Right cardiac atrium (tissue), 5 donors: ENCODE measurements at regions of chr1 and their contacts with region 1.

Region 1: GRCh38 chr1:154263465-154264332 is 8.7 kb upstream of the HAX1 start:
- DNase-seq: no peak
- ATAC-seq: peak in 1 of 2 donors; percentile 26
- H3K4me3 ChIP-seq: no peak overlapping the region
- H3K27ac ChIP-seq: no peak overlapping the region
- H3K4me1 ChIP-seq: no peaks in the 10 kb centered on the region
- H3K27me3 ChIP-seq: no peaks in the 10 kb centered on the region

Region 2: GRCh38 chr1:154170547-154171222 is 93.0 kb before region 1 on chr1:
- intact Hi-C with region 1: no loop called
- DNase-seq: no peak
- ATAC-seq: no peak
- H3K4me3 ChIP-seq: no peak overlapping the region
- H3K27ac ChIP-seq: no peak overlapping the region
- H3K4me1 ChIP-seq: no peaks in the 10 kb centered on the region
- H3K27me3 ChIP-seq: no peaks in the 10 kb centered on the region

Region 3: DNA sequence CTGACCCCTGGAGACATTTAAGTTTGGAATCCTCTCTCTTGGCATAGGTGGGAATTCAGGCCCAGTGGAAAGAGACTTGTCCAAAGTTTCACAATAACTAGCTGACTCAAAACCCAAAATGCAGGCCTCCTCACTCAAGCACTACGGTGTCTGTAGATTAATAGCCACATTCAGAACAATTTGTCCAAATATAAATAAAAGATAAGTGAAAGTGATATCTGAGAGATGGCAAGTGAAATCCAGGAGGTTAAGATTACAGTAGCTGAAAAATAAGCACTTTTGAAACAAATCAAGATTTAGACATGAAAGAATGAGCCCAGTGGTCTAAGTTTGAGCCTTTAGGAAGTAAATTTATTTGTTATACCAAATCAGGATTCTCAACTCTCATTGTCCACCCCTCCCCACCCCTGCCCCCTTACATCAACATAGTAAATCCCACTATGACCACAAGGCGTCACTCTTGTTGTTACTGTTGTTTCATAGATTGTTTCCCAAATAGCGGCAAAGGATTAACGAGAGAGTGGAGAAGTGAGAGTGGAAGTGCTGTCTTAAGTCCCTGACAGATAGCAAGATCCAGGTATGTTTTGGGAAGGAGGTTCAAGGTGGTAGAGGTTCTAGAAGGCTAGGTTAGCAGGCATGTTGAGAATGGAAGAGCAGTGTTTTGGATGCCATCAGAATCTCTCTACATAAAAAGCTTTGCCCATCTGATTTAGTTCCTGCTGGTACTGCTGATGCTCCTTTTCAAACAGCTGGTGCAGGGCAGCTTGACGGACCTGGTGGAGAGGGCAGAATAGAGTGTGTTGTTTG is 64.7 kb before region 1 on chr1:
- intact Hi-C with region 1: loop called in 1 of 4 experiments (anchors 10 kb)
- DNase-seq: no peak
- ATAC-seq: peak; percentile 52 to 63
- H3K4me3 ChIP-seq: no peak overlapping the region
- H3K27ac ChIP-seq: peak overlapping the region; percentile 17
- H3K4me1 ChIP-seq: peaks cover 2% of the 10 kb centered on the region
- H3K27me3 ChIP-seq: no peaks in the 10 kb centered on the region